Colonic mucosa (tissue), 4 donors: ENCODE measurements at regions of chr5 and their contacts with region 1.

Region 1: GRCh38 chr5:67493676-67494075 is 297.1 kb upstream of the CD180 start:
- DNase-seq: peak; percentile 64
- H3K4me3 ChIP-seq: no peak overlapping the region
- H3K27ac ChIP-seq: no peak overlapping the region
- H3K4me1 ChIP-seq: no peaks in the 10 kb centered on the region
- H3K27me3 ChIP-seq: no peaks in the 10 kb centered on the region
- CTCF ChIP-seq: peak; percentile 41

Region 2: GRCh38 chr5:68252673-68253623 is 759.3 kb after region 1 on chr5:
- intact Hi-C with region 1: loop called (anchors 10 kb)
- DNase-seq: peak; percentile 58
- H3K4me3 ChIP-seq: no peak overlapping the region
- H3K27ac ChIP-seq: peak overlapping the region; percentile 19
- H3K4me1 ChIP-seq: no peaks in the 10 kb centered on the region
- H3K27me3 ChIP-seq: no peaks in the 10 kb centered on the region
- CTCF ChIP-seq: peak; percentile 64